Gastrocnemius medialis (tissue), 4 donors: ENCODE measurements at regions of chr22 and their contacts with region 1.

Region 1: DNA sequence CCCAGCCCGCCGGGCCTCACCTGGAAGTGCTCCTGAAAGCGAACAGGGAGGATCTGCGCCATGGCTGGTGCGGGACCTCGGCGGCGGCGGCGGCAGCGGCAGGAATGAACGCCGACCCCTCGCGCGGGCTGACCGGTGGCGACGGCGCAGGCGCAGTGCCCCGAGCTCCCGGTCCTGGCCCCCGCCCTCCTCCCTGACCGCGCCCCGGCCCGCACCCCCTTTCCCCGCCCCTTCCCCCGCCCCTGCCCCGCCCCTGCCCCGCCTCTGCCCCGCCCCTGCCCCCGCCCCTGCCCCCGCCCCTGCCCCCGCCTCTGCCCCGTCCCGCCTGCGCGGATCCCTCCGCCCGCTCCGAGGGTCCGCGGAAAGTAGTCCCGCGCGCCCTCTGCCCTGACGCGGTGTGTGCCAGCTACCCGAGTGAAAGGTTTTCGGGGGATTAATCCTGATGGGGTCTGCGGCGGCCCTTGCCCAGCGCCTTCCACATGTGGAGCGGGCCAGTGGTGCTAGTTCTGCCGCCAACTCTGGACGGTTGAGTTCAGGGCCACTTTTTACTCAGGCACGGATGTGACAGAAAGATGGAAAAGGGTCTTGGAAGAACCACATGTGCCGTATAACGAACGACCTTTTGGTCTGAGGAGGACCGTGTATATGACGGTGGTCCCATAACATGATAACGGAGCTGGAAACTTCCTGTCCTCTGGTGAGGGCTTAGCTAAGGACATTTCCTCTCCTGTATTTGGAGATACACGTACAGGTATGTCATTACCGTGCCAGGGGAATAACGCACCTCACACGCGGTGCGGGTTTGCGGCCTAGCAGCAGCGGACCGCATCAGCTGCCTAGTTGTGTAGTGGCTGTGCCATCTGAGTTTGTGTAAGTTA is at the start of gene CLTCL1:
- DNase-seq: peak; percentile 81 to 84
- ATAC-seq: peak; percentile 0 to 3
- H3K4me3 ChIP-seq: peak within 1 kb of the TSS; percentile 86 to 98 (median 96)
- H3K27ac ChIP-seq: peak within 1 kb of the TSS; percentile 96 to 100 (median 97)
- H3K4me1 ChIP-seq: peaks cover 39 to 53% of the 10 kb centered on the region in 2 donors
- H3K27me3 ChIP-seq: no peaks in the 10 kb centered on the region
- CTCF ChIP-seq: no peak
- POLR2A ChIP-seq: peak; percentile 92 to 94
- total RNA-seq, gene CLTCL1: 111 to 311 (median 215) TPM

Region 2: DNA sequence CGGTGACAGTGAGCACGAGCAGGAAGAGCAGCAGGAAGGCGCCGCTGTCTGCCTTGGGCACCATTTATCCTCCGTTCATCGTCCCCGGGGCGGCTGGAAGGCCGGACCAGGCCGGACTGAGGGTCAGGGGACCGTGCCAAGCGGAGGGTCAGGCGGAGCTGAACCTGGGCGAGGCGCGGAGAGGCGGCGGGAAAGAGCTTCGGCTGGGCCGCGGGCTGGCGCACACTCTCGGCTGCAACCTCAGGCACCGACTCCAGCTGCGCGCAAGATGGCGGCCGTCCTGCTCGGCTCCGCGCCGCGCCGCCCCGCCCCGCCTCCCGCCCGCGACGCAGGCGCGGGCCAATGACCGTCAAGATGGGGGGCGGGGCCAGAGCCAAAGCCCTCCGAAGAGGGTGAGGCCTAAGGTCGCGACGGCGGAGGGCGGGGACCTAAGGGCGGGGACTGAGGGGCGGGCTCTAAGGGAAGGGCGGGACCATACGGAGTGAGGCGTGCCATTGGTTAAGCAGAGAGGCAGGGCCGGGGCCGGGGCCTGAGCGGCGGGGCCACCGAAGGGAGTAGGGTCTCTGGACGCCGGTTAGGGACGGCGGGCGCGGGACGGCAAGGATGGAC is 169.6 kb before region 1 on chr22 and contains the start of gene DGCR2:
- in situ Hi-C with region 1: no loop called
- intact Hi-C with region 1: loop called (anchors 5 kb)
- DNase-seq: peak; percentile 96 to 97
- ATAC-seq: peak; percentile 77 to 87
- H3K4me3 ChIP-seq: peak within 1 kb of the TSS; percentile 76 to 97 (median 86)
- H3K27ac ChIP-seq: peak within 1 kb of the TSS; percentile 91 to 99 (median 97)
- H3K4me1 ChIP-seq: peaks cover 42 to 47% of the 10 kb centered on the region in 2 donors
- H3K27me3 ChIP-seq: no peaks in the 10 kb centered on the region
- CTCF ChIP-seq: no peak
- POLR2A ChIP-seq: peak; percentile 79 to 86
- total RNA-seq, gene DGCR2: 30.0 to 72.7 (median 43.5) TPM

Region 3: GRCh38 chr22:19387038-19387437 is 95.2 kb after region 1 on chr22:
- in situ Hi-C with region 1: no loop called
- intact Hi-C with region 1: loop called (anchors 1 kb)
- DNase-seq: no peak
- ATAC-seq: no peak
- H3K4me3 ChIP-seq: no peak overlapping the region
- H3K27ac ChIP-seq: no peak overlapping the region
- H3K4me1 ChIP-seq: peaks cover 5 to 12% of the 10 kb centered on the region in 2 donors
- H3K27me3 ChIP-seq: no peaks in the 10 kb centered on the region
- CTCF ChIP-seq: no peak
- POLR2A ChIP-seq: no peak

Region 4: DNA sequence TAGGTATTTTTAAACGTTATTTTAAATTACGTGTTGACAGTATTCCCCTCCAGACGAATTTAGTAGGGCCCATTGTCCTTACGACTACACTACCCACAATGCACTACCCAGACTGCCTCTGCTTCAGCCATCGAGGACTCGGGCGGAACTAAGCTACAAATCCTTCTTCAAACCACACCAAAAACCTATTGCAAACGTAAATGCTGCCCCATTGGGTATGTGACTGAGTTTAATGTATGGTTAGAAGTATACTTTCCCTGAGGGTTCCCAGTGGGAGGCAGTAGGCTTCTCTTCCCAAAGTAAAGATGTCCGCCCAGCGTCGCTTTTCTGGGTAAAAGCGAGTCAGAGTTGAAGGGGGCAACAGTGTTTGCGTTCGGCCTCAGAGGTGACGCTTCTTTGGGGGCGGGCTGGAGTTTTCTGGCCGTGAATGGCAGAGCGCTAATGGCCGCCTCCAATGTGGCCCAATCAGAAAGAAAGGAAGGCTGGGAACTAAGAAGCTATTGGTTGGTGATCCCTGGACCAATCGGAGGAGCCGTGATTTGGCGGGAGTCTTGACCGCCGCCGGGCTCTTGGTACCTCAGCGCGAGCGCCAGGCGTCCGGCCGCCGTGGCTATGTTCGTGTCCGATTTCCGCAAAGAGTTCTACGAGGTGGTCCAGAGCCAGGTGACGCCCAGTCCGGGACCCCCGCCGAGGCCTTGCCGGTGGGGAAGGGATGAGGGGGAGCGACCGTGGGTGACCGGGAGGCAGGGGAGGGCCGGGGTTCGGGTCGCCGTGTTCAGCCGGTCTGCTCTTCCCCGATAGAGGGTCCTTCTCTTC is 187.7 kb after region 1 on chr22 and contains the start of gene CDC45:
- in situ Hi-C with region 1: no loop called
- intact Hi-C with region 1: loop called (anchors 2 kb)
- DNase-seq: peak; percentile 96 to 97
- ATAC-seq: peak; percentile 92 to 95
- H3K4me3 ChIP-seq: peak within 1 kb of the TSS; percentile 63 to 78 (median 70)
- H3K27ac ChIP-seq: peak within 1 kb of the TSS; percentile 90 to 98 (median 97)
- H3K4me1 ChIP-seq: peaks cover 33 to 35% of the 10 kb centered on the region in 2 donors
- H3K27me3 ChIP-seq: no peaks in the 10 kb centered on the region
- CTCF ChIP-seq: no peak
- POLR2A ChIP-seq: no peak
- total RNA-seq, gene CDC45: 0.27 TPM in 1 of 4 donors, not detected in the others

Region 5: GRCh38 chr22:19941365-19942082 is 649.7 kb after region 1 on chr22 and contains the starts of genes COMT and TXNRD2:
- in situ Hi-C with region 1: no loop called
- intact Hi-C with region 1: loop called (anchors 5 kb)
- DNase-seq: peak; percentile 49 to 64
- ATAC-seq: peak; percentile 63 to 67
- H3K4me3 ChIP-seq: peak within 1 kb of the TSS; percentile 61 to 84 (median 76)
- H3K27ac ChIP-seq: peak within 1 kb of the TSS; percentile 91 to 97 (median 96)
- H3K4me1 ChIP-seq: peaks cover 40 to 45% of the 10 kb centered on the region in 2 donors
- H3K27me3 ChIP-seq: no peaks in the 10 kb centered on the region
- CTCF ChIP-seq: no peak
- POLR2A ChIP-seq: peak; percentile 43 to 55
- total RNA-seq, gene COMT: 154 to 255 (median 223) TPM
- total RNA-seq, gene TXNRD2: 9.0 to 18.0 (median 14.4) TPM